Dendritic cell treated with granulocyte-macrophage colony-stimulating factor and Interleukin-4, amounts not matched to agents 40 ng/mL and 50 ng/mL, for 4 days (primary cell): ENCODE measurements at regions of chr21 and their contacts with region 1.

Region 1: GRCh38 chr21:44845399-44846223 is 27.7 kb upstream of the SUMO3 start:
- H3K4me3 Mint-ChIP-seq: peak overlapping the region; percentile 67
- H3K27ac Mint-ChIP-seq: peak overlapping the region; percentile 86
- H3K4me1 Mint-ChIP-seq: peaks cover 49% of the 10 kb centered on the region
- H3K27me3 Mint-ChIP-seq: peaks cover 27% of the 10 kb centered on the region

Region 2: GRCh38 chr21:44510508-44511210 is 335.0 kb before region 1 on chr21:
- intact Hi-C with region 1: no loop called
- H3K4me3 Mint-ChIP-seq: no peak overlapping the region
- H3K27ac Mint-ChIP-seq: no peak overlapping the region
- H3K4me1 Mint-ChIP-seq: peaks cover 10% of the 10 kb centered on the region
- H3K27me3 Mint-ChIP-seq: peaks cover 42% of the 10 kb centered on the region

Region 3: GRCh38 chr21:44817506-44817880 is 28.1 kb before region 1 on chr21:
- intact Hi-C with region 1: loop called (anchors 5 kb)
- H3K4me3 Mint-ChIP-seq: peak overlapping the region; percentile 77
- H3K27ac Mint-ChIP-seq: peak overlapping the region; percentile 77
- H3K4me1 Mint-ChIP-seq: peaks cover 39% of the 10 kb centered on the region
- H3K27me3 Mint-ChIP-seq: peaks cover 13% of the 10 kb centered on the region

Region 4: DNA sequence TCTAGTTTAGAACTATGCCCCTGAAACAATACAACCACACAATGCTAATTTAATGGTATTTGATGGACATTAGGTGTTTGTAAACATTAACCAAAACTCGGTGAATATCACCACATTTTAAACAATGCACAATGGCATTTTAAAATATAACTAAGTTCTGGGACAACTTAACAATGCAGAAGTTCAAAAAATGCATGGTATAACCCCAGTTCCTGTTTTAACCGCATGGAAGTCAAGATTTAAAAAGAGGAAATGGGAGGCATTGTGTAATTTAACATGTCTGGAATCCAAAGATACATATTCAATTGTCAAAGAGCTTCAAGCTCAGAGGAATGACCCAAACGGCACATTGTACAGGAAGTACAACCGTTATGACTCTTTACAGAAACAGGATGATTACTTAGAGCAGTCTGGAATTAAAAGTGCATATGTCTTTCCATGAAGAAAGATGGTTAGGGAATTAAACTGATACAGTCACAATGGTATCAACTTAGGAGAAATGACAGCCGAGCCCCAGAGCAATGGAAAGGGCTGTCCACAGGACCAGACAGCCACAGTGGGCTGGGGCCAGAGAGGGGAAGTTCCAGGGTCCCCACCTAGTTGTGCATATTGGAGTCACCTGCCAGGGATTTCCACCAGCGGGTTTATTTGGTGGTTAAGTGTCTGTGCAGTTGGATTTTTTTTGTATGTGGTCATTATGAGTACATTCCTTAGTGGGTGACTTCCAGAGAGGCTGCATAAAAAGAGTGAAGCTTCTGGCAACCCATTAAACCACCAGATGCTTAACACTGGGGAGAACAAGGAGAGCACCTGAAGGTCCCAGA is 35.4 kb after region 1 on chr21:
- intact Hi-C with region 1: loop called (anchors 5 kb)
- H3K4me3 Mint-ChIP-seq: peak overlapping the region; percentile 55
- H3K27ac Mint-ChIP-seq: peak overlapping the region; percentile 100
- H3K4me1 Mint-ChIP-seq: peaks cover 78% of the 10 kb centered on the region
- H3K27me3 Mint-ChIP-seq: no peaks in the 10 kb centered on the region